Posterior cingulate gyrus (tissue), 11 donors: ENCODE measurements at regions of chr3 and their contacts with region 1.

Region 1: GRCh38 chr3:88058591-88059368 is at the starts of genes CGGBP1 and ZNF654:
- DNase-seq: peak; percentile 97 to 100 (median 98)

Region 2: DNA sequence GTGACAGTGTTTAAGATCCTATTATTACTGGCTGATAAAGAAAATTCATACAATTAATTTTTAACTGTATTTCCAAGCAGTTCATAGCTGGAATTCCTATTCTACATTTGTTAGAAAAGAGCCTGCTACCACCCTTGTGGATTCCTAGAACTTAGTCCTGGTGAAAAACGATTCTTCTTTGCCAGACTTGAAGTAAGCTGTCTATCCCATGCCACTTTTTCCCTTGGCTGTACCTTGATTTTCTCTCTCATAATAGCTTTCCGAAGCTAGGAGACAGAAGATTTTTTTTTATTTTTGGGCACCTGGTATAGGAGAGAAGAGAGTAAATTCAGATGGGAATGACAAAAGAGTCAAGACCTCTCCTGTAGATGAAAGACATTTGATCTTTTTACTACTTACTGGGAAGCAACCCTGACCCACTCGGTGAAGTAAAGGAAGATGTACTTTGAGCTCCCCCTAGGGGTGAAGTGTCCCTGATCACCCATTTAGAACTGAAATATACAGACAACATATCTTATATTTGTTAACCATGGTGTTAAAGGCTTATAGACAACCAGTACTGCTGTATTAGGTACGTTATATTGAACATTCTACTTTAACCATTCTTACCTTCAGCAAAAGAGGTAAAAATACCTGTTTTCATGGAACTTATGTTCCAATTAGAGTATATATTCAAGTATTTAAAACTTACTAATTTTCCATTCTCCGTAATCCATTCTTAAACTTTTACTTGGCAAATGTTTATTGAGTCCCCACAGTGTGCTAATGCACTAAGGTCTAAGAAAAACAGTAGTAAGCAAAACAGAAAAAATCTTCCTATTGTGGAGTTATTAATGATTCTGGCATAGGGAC is 54.8 kb after region 1 on chr3:
- intact Hi-C with region 1: loop called (anchors 2 kb)
- DNase-seq: peak in 4 of 10 donors; percentile 17 to 53 (median 30)

Region 3: DNA sequence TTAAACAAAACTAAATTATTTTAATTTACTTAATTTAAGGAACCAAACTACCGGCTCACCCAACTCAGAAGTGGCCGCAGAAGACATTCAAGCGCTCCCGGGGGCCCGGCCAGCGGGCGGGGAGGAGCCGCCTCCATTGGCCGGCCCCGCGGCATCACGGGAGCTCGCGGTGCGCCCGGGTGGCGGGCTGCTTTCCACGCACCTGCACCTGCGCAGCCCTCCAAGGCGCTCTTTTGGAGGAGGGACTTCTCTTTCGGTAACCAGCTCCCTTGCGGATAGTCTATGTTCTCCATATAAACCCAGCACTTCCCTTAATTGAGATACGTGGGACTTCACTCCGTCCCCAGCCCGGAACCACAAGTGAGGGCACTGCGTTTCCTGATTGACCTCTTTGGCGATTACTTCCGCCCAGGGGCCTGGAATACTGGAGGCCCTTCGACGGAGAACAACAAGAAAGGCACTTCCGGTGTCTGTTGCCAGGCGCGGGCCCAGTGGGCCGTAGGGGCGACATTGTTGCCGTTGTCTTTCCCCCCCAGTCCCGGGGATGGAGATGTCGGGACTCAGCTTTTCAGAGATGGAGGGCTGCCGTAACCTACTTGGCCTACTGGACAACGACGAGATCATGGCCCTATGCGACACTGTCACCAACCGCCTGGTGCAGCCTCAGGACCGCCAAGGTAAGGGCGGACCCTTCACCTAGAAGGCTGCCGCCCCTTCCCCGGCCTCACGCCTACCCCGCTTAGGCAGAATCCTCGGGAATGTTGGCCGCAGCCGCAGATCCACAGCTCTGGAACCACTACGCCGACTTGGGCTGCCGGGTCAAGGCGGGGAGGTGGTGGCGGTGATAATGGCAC is 91.0 kb after region 1 on chr3 and contains the start of gene C3orf38:
- intact Hi-C with region 1: loop called (anchors 5 kb)
- DNase-seq: peak; percentile 84 to 98 (median 89)